ENCODE measurements at regions of chr1 and their contacts with region 1.

Region 1: GRCh38 chr1:203326830-203327683 is 21.7 kb downstream of the BTG2 start:
- DNase-seq: peak; percentile 91 to 95
- H3K4me3 ChIP-seq: peak overlapping the region; percentile 53
- H3K4me3 Mint-ChIP-seq: peak overlapping the region; percentile 85
- H3K27ac Mint-ChIP-seq: peak overlapping the region; percentile 92
- H3K4me1 ChIP-seq: peaks cover 13% of the 10 kb centered on the region; the same call in 1 of the 2 replicates
- H3K4me1 Mint-ChIP-seq: peaks cover 9% of the 10 kb centered on the region
- H3K27me3 ChIP-seq: no peaks in the 10 kb centered on the region
- H3K27me3 Mint-ChIP-seq: peaks cover 6% of the 10 kb centered on the region
- CTCF ChIP-seq: peak in 1 of 2 experiments; percentile 39

Region 2: DNA sequence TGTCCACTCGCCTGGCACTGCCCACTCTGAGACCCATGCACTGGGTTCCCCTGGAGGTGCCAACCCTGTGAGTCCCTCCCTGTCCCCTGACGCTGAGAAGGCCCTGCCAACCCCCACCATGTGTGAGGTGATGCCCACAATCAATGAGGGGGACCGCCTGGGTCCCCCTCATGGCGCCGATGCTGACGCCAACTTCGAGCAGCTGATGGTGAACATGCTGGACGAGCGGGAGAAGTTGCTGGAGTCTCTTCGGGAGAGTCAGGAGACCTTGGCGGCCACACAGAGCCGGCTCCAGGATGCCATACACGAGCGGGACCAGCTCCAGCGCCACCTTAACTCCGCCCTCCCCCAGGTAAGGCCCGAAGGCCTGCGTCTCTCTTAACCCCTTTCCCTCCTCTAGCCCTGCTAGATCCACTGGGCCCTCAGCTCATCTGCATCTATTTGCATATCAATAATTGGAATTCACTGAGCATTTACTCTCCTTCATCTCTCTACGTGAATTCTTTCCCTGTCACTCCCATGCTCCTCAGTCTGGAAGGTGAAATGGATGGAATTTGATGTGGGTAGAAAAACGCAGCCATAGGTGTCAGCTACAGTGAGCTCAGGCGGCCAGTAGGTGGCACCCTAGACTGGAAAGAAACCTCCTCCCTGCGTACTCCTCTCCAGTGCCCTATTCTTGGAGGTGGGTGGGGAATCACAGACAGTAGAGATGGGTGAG is 288.0 kb before region 1 on chr1:
- CTCF ChIA-PET with region 1: interaction called, 5 read pairs
- POLR2A ChIA-PET with region 1: no interaction called
- intact Hi-C with region 1: loop called (anchors 10 kb)
- DNase-seq: peak; percentile 74 to 80
- H3K4me3 ChIP-seq: no peak overlapping the region
- H3K4me3 Mint-ChIP-seq: no peak overlapping the region
- H3K27ac Mint-ChIP-seq: no peak overlapping the region
- H3K4me1 ChIP-seq: peaks cover 8% of the 10 kb centered on the region; the same call in 1 of the 2 replicates
- H3K4me1 Mint-ChIP-seq: peaks cover 21% of the 10 kb centered on the region
- H3K27me3 ChIP-seq: no peaks in the 10 kb centered on the region
- H3K27me3 Mint-ChIP-seq: no peaks in the 10 kb centered on the region
- CTCF ChIP-seq: peak; percentile 87 to 93

Region 3: DNA sequence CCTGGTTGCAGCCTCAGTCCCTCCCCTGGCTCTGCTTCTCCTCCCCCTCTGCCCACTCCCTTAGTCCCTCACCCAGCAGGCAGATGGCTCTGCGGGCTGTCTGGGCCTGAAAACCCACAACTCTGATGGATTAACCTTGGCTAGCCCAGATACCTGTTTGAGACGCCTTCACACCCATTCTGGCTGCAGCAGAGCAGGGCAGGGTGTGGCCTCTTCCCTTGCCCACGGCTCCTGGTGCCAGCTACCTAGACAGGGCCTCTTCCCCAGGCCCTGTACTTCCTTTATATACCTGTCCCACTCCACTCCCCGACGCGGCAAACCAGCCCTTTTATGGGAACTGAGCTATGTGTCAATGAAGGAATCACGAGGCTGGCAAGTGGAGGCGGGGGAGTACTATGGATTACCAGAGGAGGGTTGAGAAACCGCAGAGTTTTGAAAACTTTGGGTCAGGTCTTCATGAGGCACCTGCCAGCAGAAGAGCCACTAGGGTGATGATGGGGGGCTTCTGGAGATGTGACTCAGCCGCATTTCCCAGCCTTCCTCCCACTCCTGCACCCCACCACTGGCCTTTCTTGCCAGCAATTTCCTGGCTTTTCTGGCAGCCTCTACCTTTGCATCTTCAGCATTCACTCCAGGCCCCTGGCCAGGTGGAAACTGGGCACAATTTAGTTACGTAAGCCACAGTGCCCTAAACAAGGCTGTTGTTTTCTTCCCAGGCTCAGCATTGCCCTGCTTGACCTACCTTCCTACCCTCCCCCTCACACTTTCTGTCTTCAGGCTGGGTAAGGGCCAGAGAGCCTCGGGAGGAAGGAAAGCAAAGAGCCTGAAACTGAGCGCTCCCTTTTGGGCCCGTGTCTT is 140.4 kb before region 1 on chr1 and contains the start of gene CHI3L1:
- CTCF ChIA-PET with region 1: no interaction called
- POLR2A ChIA-PET with region 1: no interaction called
- intact Hi-C with region 1: no loop called
- DNase-seq: peak in 1 of 2 experiments; percentile 41
- H3K4me3 ChIP-seq: no peak within 1 kb of the TSS
- H3K4me3 Mint-ChIP-seq: peak within 1 kb of the TSS; percentile 76
- H3K27ac Mint-ChIP-seq: peak within 1 kb of the TSS; percentile 86
- H3K4me1 ChIP-seq: peaks cover 68% of the 10 kb centered on the region
- H3K4me1 Mint-ChIP-seq: peaks cover 56% of the 10 kb centered on the region
- H3K27me3 ChIP-seq: no peaks in the 10 kb centered on the region
- H3K27me3 Mint-ChIP-seq: no peaks in the 10 kb centered on the region
- CTCF ChIP-seq: no peak
- total RNA-seq, gene CHI3L1: 199 and 235 TPM in 2 replicates

Region 4: GRCh38 chr1:203273206-203273868 is 53.7 kb before region 1 on chr1:
- CTCF ChIA-PET with region 1: interaction called, 61 read pairs
- POLR2A ChIA-PET with region 1: interaction called, 3 read pairs
- intact Hi-C with region 1: loop called (anchors 1 kb)
- DNase-seq: peak; percentile 84 to 92
- H3K4me3 ChIP-seq: no peak overlapping the region
- H3K4me3 Mint-ChIP-seq: no peak overlapping the region
- H3K27ac Mint-ChIP-seq: no peak overlapping the region
- H3K4me1 ChIP-seq: peaks cover 17% of the 10 kb centered on the region
- H3K4me1 Mint-ChIP-seq: peaks cover 4% of the 10 kb centered on the region
- H3K27me3 ChIP-seq: no peaks in the 10 kb centered on the region
- H3K27me3 Mint-ChIP-seq: no peaks in the 10 kb centered on the region
- CTCF ChIP-seq: peak; percentile 95 to 97

Region 5: DNA sequence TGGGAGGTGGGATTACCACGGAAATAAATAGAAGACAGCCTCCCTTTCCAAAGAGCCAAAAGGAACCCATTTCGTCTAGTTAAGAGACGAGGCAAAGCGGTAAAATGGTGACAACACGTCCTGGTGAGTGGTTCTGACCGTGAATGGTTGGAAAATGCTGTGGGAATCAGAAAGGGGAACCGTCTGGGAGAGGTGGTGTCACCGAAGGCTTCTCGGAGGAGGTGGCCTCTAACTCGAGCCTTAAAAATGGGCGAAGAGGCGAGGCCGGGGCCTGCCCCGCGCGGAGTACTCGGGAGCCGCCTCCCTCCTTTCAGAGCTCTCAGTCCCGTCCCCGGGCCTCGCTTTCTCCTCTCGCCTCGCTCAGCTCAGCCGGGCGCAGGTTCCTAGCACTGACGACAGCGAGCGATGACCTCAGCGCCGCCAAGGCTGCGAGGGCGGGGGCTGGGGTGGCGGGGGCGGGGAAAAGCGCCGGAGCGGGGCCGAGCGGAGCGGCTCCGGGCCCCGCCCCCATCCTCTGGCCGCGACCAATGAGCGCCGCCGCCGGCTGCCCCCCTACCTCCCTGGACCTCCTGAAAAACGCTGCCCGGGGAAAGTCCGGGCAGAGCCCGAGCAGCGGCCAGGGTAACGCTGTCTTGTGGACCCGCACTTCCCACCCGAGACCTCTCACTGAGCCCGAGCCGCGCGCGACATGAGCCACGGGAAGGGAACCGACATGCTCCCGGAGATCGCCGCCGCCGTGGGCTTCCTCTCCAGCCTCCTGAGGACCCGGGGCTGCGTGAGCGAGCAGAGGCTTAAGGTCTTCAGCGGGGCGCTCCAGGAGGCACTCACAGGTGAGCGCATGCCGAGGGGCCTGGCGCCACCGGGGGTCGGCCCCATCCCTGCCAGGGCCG is 21.9 kb before region 1 on chr1 and contains the start of gene BTG2:
- CTCF ChIA-PET with region 1: interaction called, 19 read pairs
- POLR2A ChIA-PET with region 1: interaction called, 15 read pairs
- intact Hi-C with region 1: loop called (anchors 1 kb)
- DNase-seq: peak; percentile 90 to 91
- H3K4me3 ChIP-seq: peak within 1 kb of the TSS; percentile 70
- H3K4me3 Mint-ChIP-seq: peak within 1 kb of the TSS; percentile 65
- H3K27ac Mint-ChIP-seq: peak within 1 kb of the TSS; percentile 83
- H3K4me1 ChIP-seq: peaks cover 25% of the 10 kb centered on the region
- H3K4me1 Mint-ChIP-seq: peaks cover 27% of the 10 kb centered on the region
- H3K27me3 ChIP-seq: no peaks in the 10 kb centered on the region
- H3K27me3 Mint-ChIP-seq: no peaks in the 10 kb centered on the region
- CTCF ChIP-seq: no peak
- total RNA-seq, gene BTG2: 21.2 and 21.6 TPM in 2 replicates

Region 6: DNA sequence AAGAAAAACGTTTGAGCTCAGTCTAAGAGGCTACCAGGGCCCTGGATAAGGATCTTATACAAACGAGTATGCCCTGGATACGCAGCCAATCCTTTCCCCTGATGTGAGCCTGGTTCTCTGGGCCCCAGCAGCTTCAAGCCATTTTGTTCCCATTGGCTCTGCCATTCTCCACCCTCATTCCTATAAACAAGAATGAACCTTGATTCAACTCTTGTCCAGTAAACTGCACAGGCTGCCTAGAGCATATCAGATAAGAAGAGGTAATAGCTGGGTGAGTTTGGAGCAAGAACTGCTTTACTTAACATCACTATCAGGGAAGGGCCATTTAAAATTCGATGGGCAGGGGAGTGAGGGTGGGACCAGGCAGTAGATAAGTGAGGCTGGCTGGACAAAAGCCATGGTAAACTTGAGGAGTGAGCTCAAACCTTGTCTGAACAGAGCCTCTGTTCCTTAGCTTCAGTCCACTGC is 10.4 kb before region 1 on chr1:
- CTCF ChIA-PET with region 1: interaction called, 10 read pairs
- POLR2A ChIA-PET with region 1: interaction called, 15 read pairs
- intact Hi-C with region 1: no loop called
- DNase-seq: peak; percentile 29 to 52
- H3K4me3 ChIP-seq: no peak overlapping the region
- H3K4me3 Mint-ChIP-seq: no peak overlapping the region
- H3K27ac Mint-ChIP-seq: peak overlapping the region; percentile 23
- H3K4me1 ChIP-seq: peaks cover 18% of the 10 kb centered on the region
- H3K4me1 Mint-ChIP-seq: peaks cover 20% of the 10 kb centered on the region
- H3K27me3 ChIP-seq: no peaks in the 10 kb centered on the region
- H3K27me3 Mint-ChIP-seq: no peaks in the 10 kb centered on the region
- CTCF ChIP-seq: no peak

Measured in Caco-2 (cell line).